GM13977 (cell line): ENCODE measurements at regions of chr16 and their contacts with region 1.

Region 1: GRCh38 chr16:5071681-5072333 is at the start of gene ALG1:
- DNase-seq: peak; percentile 94
- CTCF ChIP-seq: no peak

Region 2: DNA sequence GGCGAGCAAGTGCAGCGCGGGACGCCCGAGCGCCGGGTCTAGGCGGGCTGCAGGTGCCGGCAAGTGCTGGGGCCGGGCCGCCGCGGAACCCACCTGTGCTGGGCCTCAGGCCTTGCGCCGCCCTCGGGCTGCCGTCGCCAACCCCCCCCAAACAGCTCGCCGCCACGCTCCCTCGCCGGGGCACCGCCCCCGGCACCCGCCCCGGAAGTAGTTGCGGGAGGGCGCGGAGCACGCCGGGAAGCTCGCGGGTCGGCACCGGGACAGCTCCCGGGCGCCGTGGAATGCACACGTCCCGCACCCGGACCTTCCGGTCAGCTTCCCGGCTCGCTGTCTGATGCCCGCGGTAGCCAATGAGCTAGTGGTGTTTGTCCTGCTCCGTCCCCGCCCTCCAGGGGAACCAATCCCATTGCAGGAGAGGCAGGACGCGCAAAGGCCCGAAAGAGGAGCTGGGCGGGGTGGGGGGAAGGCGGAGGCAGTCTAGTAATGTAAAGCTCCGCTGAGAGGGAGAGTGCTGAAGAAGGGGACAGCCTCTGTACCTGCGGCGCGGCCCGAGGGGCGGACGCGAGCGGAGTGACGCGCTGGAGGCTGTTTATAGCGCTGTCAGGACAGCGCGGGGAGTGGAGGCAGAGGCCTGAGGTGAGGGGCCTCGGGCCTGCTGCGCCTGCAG is 337.6 kb before region 1 on chr16 and contains the starts of genes ANKS3 and DNAAF8:
- in situ Hi-C with region 1: loop called (anchors 25 kb)
- DNase-seq: peak; percentile 93
- CTCF ChIP-seq: no peak